ENCODE measurements at regions of chr2 and their contacts with region 1.

Region 1: GRCh38 chr2:226835796-226836547 is at the start of gene RHBDD1:
- DNase-seq: peak; percentile 96
- H3K4me3 Mint-ChIP-seq: peak within 1 kb of the TSS; percentile 92
- H3K27ac Mint-ChIP-seq: peak within 1 kb of the TSS; percentile 99
- H3K4me1 Mint-ChIP-seq: peaks cover 56% of the 10 kb centered on the region
- H3K27me3 Mint-ChIP-seq: no peaks in the 10 kb centered on the region
- total RNA-seq, gene RHBDD1: 38.0 to 41.1 TPM

Region 2: DNA sequence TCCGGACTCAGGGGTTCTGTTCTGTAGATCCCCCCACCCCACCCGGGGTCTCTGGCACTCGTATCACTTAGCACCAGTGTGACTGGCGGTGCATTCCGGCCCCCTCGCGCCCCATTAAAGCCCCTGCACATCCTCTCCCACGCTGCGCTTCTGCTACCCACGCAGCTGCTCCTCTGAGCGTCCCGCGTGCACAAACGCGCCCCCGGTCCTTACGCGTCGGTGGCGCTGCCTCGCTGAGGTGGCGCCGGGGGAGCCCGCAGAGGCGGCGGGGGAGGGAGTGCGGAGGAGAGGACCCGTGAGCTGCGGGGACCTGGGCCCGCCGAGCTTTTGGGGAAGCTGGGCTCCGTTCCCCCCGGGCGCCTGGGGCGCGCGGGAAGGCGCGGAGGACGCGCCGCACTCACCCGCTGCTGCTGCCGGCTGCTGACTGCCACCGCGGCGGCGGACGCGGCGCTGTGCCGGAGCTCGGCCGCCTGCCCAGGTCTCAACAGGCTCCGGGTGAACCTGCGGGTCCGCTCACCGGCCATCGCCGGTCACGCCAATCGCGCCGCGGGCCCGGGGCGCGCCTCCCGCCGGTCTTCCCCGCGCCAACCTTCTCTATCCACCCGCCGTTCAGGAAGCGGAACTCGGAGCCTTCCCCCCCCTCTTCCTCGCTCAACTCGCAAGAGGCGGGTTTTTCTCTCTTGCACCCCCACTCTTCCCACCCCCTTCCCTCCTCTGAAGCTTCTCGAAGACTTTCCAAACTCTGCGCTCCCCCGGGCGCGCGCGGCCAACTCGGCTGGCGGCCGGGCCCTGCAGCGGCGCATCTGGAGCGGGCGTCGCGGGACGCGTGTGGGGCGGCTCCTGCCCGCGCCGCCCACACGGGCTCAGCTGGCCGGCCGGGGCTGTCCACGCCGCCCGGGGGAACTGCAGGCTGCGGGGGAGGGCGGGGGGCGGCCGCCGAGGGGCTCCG is 1793.8 kb before region 1 on chr2 and contains the start of gene DOCK10:
- CTCF ChIA-PET with region 1: no interaction called
- POLR2A ChIA-PET with region 1: interaction called, 4 read pairs
- intact Hi-C with region 1: loop called (anchors 5 kb)
- DNase-seq: peak; percentile 67
- H3K4me3 Mint-ChIP-seq: peak within 1 kb of the TSS; percentile 88
- H3K27ac Mint-ChIP-seq: peak within 1 kb of the TSS; percentile 96
- H3K4me1 Mint-ChIP-seq: peaks cover 44% of the 10 kb centered on the region
- H3K27me3 Mint-ChIP-seq: no peaks in the 10 kb centered on the region
- total RNA-seq, gene DOCK10: 134 to 139 TPM

Region 3: DNA sequence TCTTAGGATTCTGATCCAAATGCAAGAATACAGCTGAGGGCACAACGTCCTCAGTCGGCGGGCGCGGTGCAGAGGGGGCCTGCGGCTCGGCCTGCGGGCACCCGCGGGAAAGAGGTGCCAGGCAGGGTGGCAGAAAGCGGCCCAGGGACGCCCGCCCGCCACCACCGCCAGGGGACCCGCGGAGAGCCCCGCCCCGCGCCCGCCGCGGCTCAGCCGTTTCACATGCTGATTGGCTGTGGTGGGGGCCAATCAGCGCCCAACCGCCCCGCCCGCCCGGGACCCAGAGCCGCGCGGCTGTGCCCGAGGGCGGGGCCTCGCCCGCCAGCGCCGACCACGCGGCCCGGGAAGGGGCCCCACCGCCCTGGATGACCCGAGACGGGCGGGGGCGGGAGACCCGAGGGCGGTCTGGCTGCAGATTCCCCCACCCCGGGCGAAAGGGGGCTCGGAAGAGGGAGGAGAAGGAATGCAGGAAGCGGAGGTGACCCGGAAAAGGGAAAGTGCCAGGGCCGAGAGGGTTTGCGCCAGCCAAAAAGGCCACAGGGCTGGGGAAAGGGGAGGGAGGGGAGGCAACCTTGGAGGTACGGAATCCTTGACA is 44.4 kb before region 1 on chr2:
- CTCF ChIA-PET with region 1: no interaction called
- POLR2A ChIA-PET with region 1: interaction called, 4 read pairs
- intact Hi-C with region 1: loop called (anchors 1 kb)
- DNase-seq: peak; percentile 94
- H3K4me3 Mint-ChIP-seq: peak overlapping the region; percentile 80
- H3K27ac Mint-ChIP-seq: peak overlapping the region; percentile 92
- H3K4me1 Mint-ChIP-seq: peaks cover 29% of the 10 kb centered on the region
- H3K27me3 Mint-ChIP-seq: no peaks in the 10 kb centered on the region

Region 4: DNA sequence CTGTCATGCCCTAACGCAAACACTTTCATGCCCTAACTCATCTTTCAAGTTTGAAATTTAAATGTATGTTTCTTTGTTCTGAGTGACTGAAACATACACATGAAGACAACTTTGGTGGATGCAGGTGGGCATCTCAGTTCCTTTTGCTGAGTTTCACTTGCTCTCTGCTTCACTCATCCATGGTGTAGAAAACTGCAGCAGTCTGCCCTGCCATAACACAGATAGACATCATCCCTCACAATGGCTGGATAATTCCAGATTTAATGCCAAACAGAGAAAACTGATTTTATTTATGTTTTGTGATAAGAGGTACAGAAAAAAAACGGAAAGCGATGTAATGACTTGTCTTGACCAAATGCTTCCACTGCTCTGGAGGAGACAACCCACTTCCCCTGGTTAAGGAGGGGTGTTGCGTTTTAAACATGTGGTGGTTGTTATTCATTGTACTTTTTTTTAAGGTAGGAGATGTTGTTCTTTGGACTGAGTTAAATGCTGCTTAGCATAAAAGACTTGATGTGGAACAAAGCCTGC is 70.3 kb after region 1 on chr2:
- CTCF ChIA-PET with region 1: no interaction called
- POLR2A ChIA-PET with region 1: no interaction called
- intact Hi-C with region 1: loop called (anchors 1 kb)
- DNase-seq: no peak
- H3K4me3 Mint-ChIP-seq: no peak overlapping the region
- H3K27ac Mint-ChIP-seq: no peak overlapping the region
- H3K4me1 Mint-ChIP-seq: peaks cover 26% of the 10 kb centered on the region
- H3K27me3 Mint-ChIP-seq: no peaks in the 10 kb centered on the region

Region 5: GRCh38 chr2:227411320-227411989 is 575.5 kb after region 1 on chr2:
- CTCF ChIA-PET with region 1: no interaction called
- POLR2A ChIA-PET with region 1: no interaction called
- intact Hi-C with region 1: loop called (anchors 5 kb)
- DNase-seq: peak; percentile 81
- H3K4me3 Mint-ChIP-seq: peak overlapping the region; percentile 11
- H3K27ac Mint-ChIP-seq: peak overlapping the region; percentile 89
- H3K4me1 Mint-ChIP-seq: peaks cover 57% of the 10 kb centered on the region
- H3K27me3 Mint-ChIP-seq: no peaks in the 10 kb centered on the region

Region 6: DNA sequence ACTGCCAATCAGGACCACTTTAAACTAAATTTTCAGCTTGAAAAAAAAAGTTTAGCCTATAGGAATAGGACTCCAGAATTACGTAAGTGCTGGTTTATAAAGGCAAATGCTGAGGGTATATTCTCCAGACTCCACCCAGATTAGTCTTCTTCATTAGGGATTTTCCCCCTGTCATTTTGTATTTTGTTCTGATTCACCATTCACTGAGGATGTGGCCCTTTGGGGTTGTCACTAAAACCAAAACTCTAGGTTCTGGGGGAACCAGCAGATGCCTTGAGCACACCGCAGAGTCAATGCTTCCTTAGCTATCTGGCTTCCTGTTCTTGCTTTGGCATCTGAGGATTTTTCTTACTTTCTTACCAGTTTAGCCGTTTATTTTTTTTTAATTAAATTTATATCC is 791.8 kb after region 1 on chr2:
- CTCF ChIA-PET with region 1: no interaction called
- POLR2A ChIA-PET with region 1: no interaction called
- intact Hi-C with region 1: no loop called
- DNase-seq: peak; percentile 58
- H3K4me3 Mint-ChIP-seq: no peak overlapping the region
- H3K27ac Mint-ChIP-seq: no peak overlapping the region
- H3K4me1 Mint-ChIP-seq: no peaks in the 10 kb centered on the region
- H3K27me3 Mint-ChIP-seq: peaks cover 27% of the 10 kb centered on the region

Region 7: DNA sequence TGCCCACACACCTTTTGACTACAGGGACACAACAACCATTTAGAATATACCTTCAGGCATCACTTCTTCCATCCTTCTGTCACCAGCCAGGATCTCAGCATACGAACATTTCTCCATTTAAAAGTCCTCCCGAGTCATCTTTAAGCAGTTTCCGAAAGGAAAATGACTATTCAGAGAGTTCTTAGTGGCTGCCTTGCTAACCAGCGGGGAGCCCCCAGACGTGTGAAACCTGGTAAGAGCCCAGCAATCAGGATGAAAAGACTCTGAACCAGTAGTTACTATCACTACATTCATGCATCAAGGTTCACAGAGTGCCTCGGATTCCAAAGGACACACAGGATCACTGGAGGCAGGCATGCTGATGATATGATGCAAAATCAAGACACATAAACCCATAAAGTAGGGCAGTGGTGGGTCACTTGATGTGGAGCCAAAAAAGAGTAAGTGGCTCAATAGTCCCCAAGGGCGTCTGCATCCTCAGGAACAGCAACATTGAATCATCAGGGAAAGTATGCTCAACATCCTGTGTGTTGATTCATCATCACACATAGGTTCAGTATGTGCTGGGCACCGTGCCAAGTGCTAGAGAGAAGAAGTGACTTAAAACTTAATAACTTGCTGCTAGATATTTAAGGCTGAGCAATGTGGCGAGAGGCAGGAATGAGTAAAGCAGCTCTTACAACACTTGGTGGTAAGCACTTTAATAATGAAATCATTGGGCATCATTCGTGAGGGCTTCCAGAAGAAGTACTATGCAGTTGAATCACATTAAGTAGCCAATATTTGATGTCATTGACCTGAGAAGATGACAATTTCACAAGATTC is 982.1 kb after region 1 on chr2:
- CTCF ChIA-PET with region 1: no interaction called
- POLR2A ChIA-PET with region 1: no interaction called
- intact Hi-C with region 1: loop called (anchors 10 kb)
- DNase-seq: peak; percentile 94
- H3K4me3 Mint-ChIP-seq: peak overlapping the region; percentile 42
- H3K27ac Mint-ChIP-seq: peak overlapping the region; percentile 79
- H3K4me1 Mint-ChIP-seq: peaks cover 39% of the 10 kb centered on the region
- H3K27me3 Mint-ChIP-seq: peaks cover 5% of the 10 kb centered on the region

Measured in activated CD4-positive, alpha-beta memory T cell treated with anti-CD3 and anti-CD28 coated beads for 36 hours (primary cell).